Activated naive CD4-positive, alpha-beta T cell treated with anti-CD3 and anti-CD28 coated beads, Interleukin-2, amount 10 ng/mL, durations not matched to agents 7 days and 5 days (primary cell): ENCODE measurements at regions of chr1 and their contacts with region 1.

Region 1: GRCh38 chr1:206663832-206664652 is 20.7 kb upstream of the MAPKAPK2 start:
- DNase-seq: peak; percentile 76
- H3K4me3 Mint-ChIP-seq: no peak overlapping the region
- H3K27ac Mint-ChIP-seq: no peak overlapping the region
- H3K4me1 Mint-ChIP-seq: peaks cover 20% of the 10 kb centered on the region
- H3K27me3 Mint-ChIP-seq: peaks cover 68% of the 10 kb centered on the region

Region 2: DNA sequence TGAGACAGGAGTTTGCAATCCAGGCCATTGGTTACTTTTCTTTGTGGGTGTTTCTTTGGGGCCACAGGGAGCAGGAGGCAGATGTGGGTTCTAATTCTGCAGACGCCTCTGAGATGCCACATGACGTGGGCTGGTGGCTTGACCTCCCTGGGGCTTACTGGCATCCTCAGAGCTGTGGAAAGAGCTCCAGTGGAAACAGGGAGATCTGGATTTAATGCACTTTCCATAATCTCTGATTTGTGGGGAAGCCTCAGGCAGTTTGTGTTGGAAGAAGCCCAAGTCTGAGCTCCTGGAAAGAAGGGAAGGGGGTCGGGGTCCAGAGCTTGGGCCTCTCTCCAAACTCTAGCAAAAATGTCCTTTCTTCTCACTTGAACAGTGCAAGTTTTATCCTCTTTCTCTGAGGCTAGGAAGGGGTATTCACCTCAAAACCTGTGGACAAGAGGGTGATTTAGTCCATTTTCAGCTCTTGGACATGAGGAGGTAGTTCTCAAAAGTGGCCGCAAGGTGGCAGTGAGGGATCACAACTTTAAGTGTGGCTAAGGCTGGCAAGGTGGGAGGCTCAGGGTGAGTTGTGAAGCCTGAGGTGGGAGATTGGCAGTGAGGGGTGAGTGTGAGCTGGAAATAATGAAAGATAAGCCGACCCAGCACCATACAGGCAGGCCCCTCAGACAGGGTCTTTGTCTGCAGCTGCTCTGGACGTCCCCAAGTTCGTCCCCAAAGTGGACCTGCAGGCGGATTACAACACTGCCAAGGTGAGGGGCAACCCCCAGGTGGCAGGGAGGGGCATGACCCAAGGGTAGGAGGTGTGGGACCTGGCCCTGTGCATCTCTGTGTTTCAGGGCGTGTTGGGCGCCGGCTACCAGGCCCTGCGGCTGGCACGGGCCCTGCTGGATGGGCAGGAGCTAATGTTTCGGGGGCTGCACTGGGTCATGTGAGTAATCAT is 184.6 kb before region 1 on chr1:
- CTCF ChIA-PET with region 1: interaction called, 58 read pairs
- DNase-seq: peak; percentile 79
- H3K4me3 Mint-ChIP-seq: no peak overlapping the region
- H3K27ac Mint-ChIP-seq: peak overlapping the region; percentile 58
- H3K4me1 Mint-ChIP-seq: peaks cover 16% of the 10 kb centered on the region
- H3K27me3 Mint-ChIP-seq: no peaks in the 10 kb centered on the region

Region 3: GRCh38 chr1:206551986-206552326 is 112.1 kb before region 1 on chr1:
- CTCF ChIA-PET with region 1: interaction called, 16 read pairs
- DNase-seq: peak; percentile 86
- H3K4me3 Mint-ChIP-seq: peak overlapping the region; percentile 56
- H3K27ac Mint-ChIP-seq: peak overlapping the region; percentile 89
- H3K4me1 Mint-ChIP-seq: peaks cover 62% of the 10 kb centered on the region
- H3K27me3 Mint-ChIP-seq: no peaks in the 10 kb centered on the region

Region 4: DNA sequence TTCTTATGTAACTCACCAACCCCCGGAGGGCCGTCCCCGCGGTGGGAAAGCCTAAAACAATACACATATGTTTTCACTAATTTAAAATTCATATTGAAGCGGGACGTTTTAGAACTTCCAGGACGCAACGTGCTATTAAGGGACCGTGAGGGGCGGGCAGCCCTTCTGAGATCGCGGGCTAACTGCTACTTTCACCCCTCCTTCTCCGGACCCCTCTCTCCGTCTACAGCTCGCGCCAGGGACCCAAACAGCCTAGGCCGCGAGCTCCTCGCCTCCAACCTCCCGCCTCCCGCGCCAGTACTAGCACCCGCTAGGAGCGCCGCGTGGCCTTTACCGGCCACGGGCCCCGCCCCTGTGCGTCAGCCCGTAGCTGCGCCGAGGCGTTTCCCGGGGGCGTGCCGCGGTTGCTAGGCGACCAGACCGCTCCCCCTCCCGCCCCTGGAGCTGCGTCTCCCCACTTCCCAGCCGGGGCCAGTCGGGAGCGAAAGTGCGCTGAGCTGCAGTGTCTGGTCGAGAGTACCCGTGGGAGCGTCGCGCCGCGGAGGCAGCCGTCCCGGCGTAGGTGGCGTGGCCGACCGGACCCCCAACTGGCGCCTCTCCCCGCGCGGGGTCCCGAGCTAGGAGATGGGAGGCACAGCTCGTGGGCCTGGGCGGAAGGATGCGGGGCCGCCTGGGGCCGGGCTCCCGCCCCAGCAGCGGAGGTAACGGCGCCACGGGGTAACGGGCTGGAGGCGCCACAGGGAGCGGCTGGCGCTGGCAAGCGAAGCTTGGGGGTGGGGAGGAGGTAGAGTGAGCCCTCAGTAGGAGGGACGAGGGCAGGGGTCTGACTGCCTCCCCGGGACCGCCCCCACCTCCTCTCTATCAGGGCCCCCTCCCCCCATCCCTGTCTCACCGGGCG is 28.7 kb before region 1 on chr1 and contains the start of gene DYRK3:
- CTCF ChIA-PET with region 1: interaction called, 188 read pairs
- DNase-seq: peak; percentile 96
- H3K4me3 Mint-ChIP-seq: peak within 1 kb of the TSS; percentile 77
- H3K27ac Mint-ChIP-seq: peak within 1 kb of the TSS; percentile 85
- H3K4me1 Mint-ChIP-seq: peaks cover 26% of the 10 kb centered on the region
- H3K27me3 Mint-ChIP-seq: peaks cover 38% of the 10 kb centered on the region

Region 5: DNA sequence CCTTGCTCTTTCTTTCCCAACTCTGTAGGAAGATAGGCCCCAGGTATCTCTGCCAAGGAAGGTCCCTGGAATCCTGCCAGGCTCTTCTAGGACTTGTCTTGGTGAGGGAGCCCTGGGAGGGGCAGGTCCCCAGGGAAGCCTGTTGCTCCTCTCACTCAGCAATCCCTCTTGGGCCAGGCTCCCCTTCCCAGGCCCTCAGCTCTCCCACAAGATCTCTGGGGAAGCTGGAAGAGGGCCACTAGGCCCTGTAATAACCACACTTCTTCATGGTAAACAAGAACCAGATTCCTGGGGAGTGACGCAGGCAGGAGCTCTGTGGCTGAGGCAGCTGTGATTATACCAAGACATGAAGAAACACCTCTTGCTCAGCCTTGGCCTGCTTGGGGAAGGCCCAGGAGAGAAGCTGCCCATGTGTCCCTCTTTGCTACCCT is 10.7 kb after region 1 on chr1:
- CTCF ChIA-PET with region 1: interaction called, 59 read pairs
- DNase-seq: no peak
- H3K4me3 Mint-ChIP-seq: no peak overlapping the region
- H3K27ac Mint-ChIP-seq: no peak overlapping the region
- H3K4me1 Mint-ChIP-seq: peaks cover 2% of the 10 kb centered on the region
- H3K27me3 Mint-ChIP-seq: peaks cover 16% of the 10 kb centered on the region

Region 6: GRCh38 chr1:206725109-206725963 is 61.3 kb after region 1 on chr1:
- CTCF ChIA-PET with region 1: interaction called, 20 read pairs
- DNase-seq: peak; percentile 80
- H3K4me3 Mint-ChIP-seq: no peak overlapping the region
- H3K27ac Mint-ChIP-seq: no peak overlapping the region
- H3K4me1 Mint-ChIP-seq: peaks cover 26% of the 10 kb centered on the region
- H3K27me3 Mint-ChIP-seq: no peaks in the 10 kb centered on the region

Region 7: DNA sequence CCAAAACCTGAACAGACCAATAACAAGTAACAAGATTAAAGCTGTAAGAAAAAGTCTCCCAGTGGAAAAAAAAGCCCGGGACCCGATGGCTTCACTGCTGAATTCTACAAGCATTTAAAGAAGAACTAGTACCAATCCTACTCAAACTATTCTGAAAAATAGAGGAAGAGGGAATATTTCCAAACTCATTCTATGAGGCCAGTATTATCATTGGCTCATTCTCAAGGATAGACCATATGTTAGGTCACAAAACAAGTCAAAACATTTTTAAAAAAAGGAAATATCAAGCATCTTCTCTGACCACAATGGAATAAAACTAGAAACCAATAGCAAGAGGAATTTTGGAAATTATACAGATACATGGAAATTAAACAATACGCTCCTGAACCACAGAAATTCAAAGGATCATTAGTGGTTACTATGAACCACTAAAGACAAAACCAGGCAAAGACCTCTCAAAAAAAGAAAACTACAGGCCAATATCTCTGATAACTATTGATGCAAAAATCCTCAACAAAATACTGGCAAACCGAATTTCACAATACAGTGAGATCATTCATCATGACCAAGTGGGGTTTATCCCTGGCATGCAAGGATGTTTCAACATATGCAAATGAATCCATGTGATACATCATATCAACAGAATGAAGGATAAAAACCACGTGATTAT is 187.4 kb after region 1 on chr1:
- CTCF ChIA-PET with region 1: no interaction called
- DNase-seq: no peak
- H3K4me3 Mint-ChIP-seq: no peak overlapping the region
- H3K27ac Mint-ChIP-seq: no peak overlapping the region
- H3K4me1 Mint-ChIP-seq: peaks cover 11% of the 10 kb centered on the region
- H3K27me3 Mint-ChIP-seq: peaks cover 49% of the 10 kb centered on the region

Region 8: GRCh38 chr1:206982216-206982615 is 318.2 kb after region 1 on chr1:
- CTCF ChIA-PET with region 1: interaction called, 17 read pairs
- DNase-seq: peak; percentile 78
- H3K4me3 Mint-ChIP-seq: no peak overlapping the region
- H3K27ac Mint-ChIP-seq: no peak overlapping the region
- H3K4me1 Mint-ChIP-seq: no peaks in the 10 kb centered on the region
- H3K27me3 Mint-ChIP-seq: peaks cover 60% of the 10 kb centered on the region